Thyroid gland (tissue), 4 donors: ENCODE measurements at regions of chr20 and their contacts with region 1.

Region 1: GRCh38 chr20:3193806-3194616 is 10.5 kb downstream of the DDRGK1 start:
- DNase-seq: no peak
- H3K4me3 ChIP-seq: no peak overlapping the region
- H3K27ac ChIP-seq: no peak overlapping the region
- H3K4me1 ChIP-seq: no peaks in the 10 kb centered on the region
- H3K27me3 ChIP-seq: no peaks in the 10 kb centered on the region
- CTCF ChIP-seq: no peak
- POLR2A ChIP-seq: no peak

Region 2: GRCh38 chr20:3165406-3166337 is 28.3 kb before region 1 on chr20:
- intact Hi-C with region 1: loop called (anchors 2 kb)
- DNase-seq: no peak
- H3K4me3 ChIP-seq: no peak overlapping the region
- H3K27ac ChIP-seq: no peak overlapping the region
- H3K4me1 ChIP-seq: peaks cover 13 to 33% of the 10 kb centered on the region in 2 donors
- H3K27me3 ChIP-seq: no peaks in the 10 kb centered on the region
- CTCF ChIP-seq: no peak
- POLR2A ChIP-seq: no peak